Activated naive CD4-positive, alpha-beta T cell treated with anti-CD3 and anti-CD28 coated beads for 36 hours (primary cell): ENCODE measurements at regions of chr6 and their contacts with region 1.

Region 1: DNA sequence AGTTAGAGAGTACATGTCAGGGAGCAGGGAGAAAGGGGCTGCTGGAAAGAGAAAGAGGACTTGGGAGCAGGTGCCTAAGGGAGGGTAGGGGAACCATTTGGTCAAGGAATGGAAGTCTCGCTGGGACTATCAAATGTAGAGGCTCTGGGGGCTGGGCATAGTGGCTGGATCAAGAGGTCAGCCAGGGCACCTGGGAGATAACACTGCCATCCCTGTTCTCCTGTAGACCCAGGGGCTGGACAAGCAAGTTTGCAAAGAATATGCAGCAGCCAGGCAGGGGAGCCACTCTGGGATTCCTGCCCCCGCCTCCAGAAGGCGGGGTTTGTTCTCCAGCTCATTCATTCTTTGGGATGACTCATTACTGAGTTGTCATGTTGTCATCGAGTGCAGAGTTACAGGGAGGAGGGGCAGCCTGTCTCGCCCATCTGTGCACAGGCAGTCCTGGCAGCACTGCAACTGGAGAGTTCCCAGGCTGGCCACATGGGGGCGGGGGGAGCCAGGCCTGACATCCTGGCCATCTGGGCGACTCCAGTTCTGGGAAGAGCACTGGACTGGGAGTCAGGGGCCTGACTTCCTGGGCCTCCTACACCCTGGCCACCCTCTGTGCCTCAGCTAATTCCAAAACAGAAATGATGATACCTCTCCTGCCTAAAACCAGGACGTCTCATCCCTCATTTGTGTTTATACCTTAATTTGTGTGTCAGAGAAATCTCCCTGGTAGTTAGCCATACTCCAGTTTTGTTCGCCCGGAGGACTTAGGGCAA is 28.2 kb upstream of the ZFAND3 start:
- DNase-seq: peak; percentile 95
- H3K4me3 Mint-ChIP-seq: no peak overlapping the region
- H3K27ac Mint-ChIP-seq: no peak overlapping the region
- H3K4me1 Mint-ChIP-seq: peaks cover 11% of the 10 kb centered on the region
- H3K27me3 Mint-ChIP-seq: no peaks in the 10 kb centered on the region

Region 2: GRCh38 chr6:37705239-37706051 is 85.9 kb before region 1 on chr6:
- CTCF ChIA-PET with region 1: no interaction called
- intact Hi-C with region 1: loop called (anchors 2 kb)
- DNase-seq: peak; percentile 71
- H3K4me3 Mint-ChIP-seq: peak overlapping the region; percentile 65
- H3K27ac Mint-ChIP-seq: peak overlapping the region; percentile 57
- H3K4me1 Mint-ChIP-seq: peaks cover 9% of the 10 kb centered on the region
- H3K27me3 Mint-ChIP-seq: no peaks in the 10 kb centered on the region

Region 3: DNA sequence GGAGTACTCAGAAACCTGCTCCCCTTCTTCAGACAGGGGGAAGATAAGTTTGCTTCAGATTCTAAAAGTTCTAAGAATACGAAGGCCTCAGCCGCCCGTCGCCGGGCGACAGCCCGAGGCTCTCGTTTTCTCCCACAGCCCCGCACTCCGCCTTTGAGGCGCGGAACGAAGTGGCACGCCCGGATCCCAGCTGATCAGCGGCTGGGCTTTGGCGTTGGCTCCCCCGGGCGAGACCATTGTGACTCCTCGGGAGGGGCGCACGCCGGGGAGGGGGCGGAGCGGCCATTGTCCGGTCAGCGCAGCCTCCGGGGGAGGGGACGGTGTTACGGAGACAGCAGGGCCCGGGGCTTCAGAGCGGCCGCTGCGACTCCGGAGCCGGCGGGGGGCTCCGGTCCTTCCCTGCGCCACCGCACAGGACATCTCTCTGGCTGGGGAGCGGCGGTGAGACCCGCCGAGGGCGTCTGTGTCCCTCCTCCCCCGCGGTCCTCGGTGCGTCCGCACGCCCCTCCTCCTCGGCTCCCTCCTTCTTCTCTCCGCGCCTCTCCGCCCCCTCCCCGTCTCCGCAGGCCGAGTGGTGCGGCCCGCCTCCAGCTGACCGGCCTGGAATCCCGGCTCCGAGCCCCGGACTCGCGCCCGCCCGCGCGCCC is 28.0 kb after region 1 on chr6 and contains the start of gene ZFAND3:
- CTCF ChIA-PET with region 1: interaction called, 3 read pairs
- intact Hi-C with region 1: loop called (anchors 1 kb)
- DNase-seq: peak; percentile 95
- H3K4me3 Mint-ChIP-seq: peak within 1 kb of the TSS; percentile 92
- H3K27ac Mint-ChIP-seq: peak within 1 kb of the TSS; percentile 98
- H3K4me1 Mint-ChIP-seq: peaks cover 52% of the 10 kb centered on the region
- H3K27me3 Mint-ChIP-seq: no peaks in the 10 kb centered on the region
- total RNA-seq, gene ZFAND3: 33.6 to 35.3 TPM

Region 4: DNA sequence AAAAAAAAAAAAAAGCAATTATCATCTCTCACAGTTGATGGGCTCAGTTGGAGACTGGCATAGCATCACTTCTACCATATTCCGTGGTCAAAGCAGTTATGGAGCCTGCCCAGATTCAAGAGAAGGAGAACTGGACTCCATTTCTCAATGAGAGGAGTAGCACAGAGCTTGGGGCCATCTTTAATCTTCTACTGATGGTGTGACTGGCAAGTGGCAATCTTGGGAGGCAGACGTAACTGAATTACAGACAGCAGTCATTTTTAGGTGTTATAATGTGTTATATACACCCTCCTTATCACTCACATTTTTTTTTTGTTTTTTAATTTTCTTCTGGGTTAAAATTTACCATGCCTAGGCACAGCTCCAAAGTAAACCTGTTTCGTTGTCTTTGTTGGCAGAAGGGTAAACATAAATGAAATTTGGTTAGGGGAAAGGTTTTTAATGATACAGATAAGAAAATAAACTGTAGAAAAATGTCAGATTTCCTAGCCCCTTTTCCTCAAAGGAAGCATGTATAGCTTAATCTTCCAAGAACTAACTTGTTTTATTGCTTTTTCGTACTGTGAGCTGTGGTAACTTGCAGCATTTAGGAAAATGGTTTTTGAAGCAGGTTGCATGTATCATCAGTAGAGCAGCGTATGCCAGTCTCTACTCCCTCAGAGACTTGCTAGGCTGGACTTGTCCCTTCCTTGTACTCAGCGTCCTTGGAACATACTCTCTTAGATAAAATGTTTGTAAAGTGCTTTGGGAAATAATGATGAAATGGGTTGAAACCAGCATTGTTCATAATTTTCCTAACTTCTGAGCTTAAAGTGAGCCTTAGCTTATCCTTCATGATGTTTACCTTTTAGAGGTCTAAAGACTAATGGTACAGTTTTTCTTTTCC is 53.9 kb after region 1 on chr6:
- CTCF ChIA-PET with region 1: no interaction called
- intact Hi-C with region 1: no loop called
- DNase-seq: no peak
- H3K4me3 Mint-ChIP-seq: no peak overlapping the region
- H3K27ac Mint-ChIP-seq: no peak overlapping the region
- H3K4me1 Mint-ChIP-seq: peaks cover 50% of the 10 kb centered on the region
- H3K27me3 Mint-ChIP-seq: no peaks in the 10 kb centered on the region

Region 5: DNA sequence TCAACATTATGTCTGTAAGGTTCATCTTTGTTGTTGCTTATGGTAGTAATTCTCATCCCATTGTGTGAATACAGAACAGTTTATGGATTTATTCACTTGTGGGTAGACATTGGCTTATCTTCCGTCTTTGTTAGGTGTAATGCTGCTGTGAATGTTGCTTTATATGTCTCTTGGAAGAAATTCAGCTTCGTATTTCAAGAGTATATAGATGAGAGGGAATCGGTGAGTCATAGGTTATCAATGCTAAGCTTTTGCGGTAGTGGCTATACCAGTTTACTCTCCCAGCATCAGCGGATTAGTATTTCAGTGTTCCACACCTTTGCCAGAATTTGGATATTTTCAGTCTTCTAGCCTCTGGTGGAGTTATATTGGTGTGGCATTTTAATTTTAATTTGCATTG is 106.0 kb after region 1 on chr6:
- CTCF ChIA-PET with region 1: interaction called, 3 read pairs
- intact Hi-C with region 1: loop called (anchors 1 kb)
- DNase-seq: no peak
- H3K4me3 Mint-ChIP-seq: no peak overlapping the region
- H3K27ac Mint-ChIP-seq: no peak overlapping the region
- H3K4me1 Mint-ChIP-seq: peaks cover 41% of the 10 kb centered on the region
- H3K27me3 Mint-ChIP-seq: no peaks in the 10 kb centered on the region

Region 6: DNA sequence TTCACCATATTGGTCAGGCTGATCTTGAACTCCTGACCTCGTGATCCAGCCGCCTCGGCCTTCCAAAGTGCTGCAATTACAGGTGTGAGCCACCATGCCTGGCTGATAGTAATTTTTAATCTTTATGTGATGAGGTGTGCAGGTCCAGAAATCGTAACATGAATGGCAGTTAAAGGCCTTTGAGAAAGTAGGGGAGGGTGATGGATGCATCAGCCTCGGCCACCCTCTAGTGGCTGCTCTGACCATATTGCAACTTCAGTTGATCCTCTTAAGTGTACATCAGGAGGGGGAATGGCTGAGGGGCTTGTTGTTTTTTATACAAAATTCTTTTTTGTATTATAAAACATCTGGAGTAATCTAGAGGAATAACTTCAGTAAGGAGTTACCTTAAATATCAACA is 221.2 kb after region 1 on chr6:
- CTCF ChIA-PET with region 1: interaction called, 6 read pairs
- intact Hi-C with region 1: loop called (anchors 1 kb)
- DNase-seq: peak; percentile 24
- H3K4me3 Mint-ChIP-seq: no peak overlapping the region
- H3K27ac Mint-ChIP-seq: no peak overlapping the region
- H3K4me1 Mint-ChIP-seq: peaks cover 14% of the 10 kb centered on the region
- H3K27me3 Mint-ChIP-seq: no peaks in the 10 kb centered on the region

Region 7: GRCh38 chr6:38413102-38413800 is 621.9 kb after region 1 on chr6:
- CTCF ChIA-PET with region 1: no interaction called
- intact Hi-C with region 1: loop called (anchors 1 kb)
- DNase-seq: peak; percentile 19
- H3K4me3 Mint-ChIP-seq: no peak overlapping the region
- H3K27ac Mint-ChIP-seq: peak overlapping the region; percentile 52
- H3K4me1 Mint-ChIP-seq: peaks cover 20% of the 10 kb centered on the region
- H3K27me3 Mint-ChIP-seq: no peaks in the 10 kb centered on the region

Region 8: GRCh38 chr6:38493931-38494547 is 702.7 kb after region 1 on chr6:
- CTCF ChIA-PET with region 1: interaction called, 4 read pairs
- intact Hi-C with region 1: loop called (anchors 1 kb)
- DNase-seq: peak; percentile 95
- H3K4me3 Mint-ChIP-seq: no peak overlapping the region
- H3K27ac Mint-ChIP-seq: no peak overlapping the region
- H3K4me1 Mint-ChIP-seq: peaks cover 10% of the 10 kb centered on the region
- H3K27me3 Mint-ChIP-seq: no peaks in the 10 kb centered on the region